Activated CD4-positive, alpha-beta T cell treated with anti-CD3 and anti-CD28 coated beads, Interleukin-2, amount 10 ng/mL, durations not matched to agents 24 days and 14 days (primary cell): ENCODE measurements at regions of chr10 and their contacts with region 1.

Region 1: GRCh38 chr10:132961787-132962622 is 19.6 kb upstream of the CFAP46 start:
- DNase-seq: peak; percentile 91
- H3K4me3 Mint-ChIP-seq: peak overlapping the region; percentile 84
- H3K27ac Mint-ChIP-seq: peak overlapping the region; percentile 74
- H3K4me1 Mint-ChIP-seq: peaks cover 17% of the 10 kb centered on the region
- H3K27me3 Mint-ChIP-seq: peaks cover 16% of the 10 kb centered on the region

Region 2: DNA sequence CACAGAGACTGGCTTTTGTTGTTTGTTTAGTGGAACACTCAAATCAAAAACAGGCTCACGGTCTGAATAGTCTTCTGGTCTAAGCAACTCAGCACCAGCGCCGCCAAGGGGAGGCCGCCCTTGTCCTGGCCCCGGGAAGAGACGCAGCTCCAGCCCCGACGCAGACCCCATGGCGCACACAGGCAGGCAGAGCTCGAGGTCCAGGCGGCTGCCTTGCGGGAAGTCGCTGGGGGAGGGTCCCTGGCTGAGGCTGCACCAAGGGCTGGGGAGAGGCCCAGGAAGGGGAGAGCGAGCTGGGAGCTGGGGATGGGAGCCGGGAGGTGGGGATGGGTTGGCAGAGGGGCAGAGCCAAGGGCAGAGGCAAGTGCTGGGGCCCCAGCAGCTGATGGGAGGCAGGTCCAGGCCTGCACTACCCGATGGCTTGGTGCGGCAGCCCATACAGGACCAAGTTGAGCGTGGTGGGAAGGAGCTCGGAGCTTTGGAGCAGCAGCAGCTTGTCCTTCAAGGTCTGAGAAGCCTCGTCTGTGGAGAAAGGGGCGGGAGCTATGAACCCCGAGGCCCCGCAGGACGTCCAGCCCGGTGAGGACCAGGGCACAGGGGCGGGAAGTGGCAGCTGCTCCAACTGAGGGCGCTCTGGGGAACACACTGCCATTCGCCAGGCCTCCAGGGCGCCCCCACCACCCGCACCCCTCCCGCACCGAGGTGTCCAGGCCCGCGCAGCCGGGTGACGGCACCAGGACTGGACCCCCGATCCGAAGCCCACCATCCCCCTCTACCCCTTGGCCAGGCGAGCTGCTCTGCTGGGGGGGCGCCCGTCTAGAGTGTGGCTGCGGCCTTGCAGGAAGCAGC is 153.4 kb before region 1 on chr10:
- intact Hi-C with region 1: no loop called
- DNase-seq: peak; percentile 51
- H3K4me3 Mint-ChIP-seq: no peak overlapping the region
- H3K27ac Mint-ChIP-seq: no peak overlapping the region
- H3K4me1 Mint-ChIP-seq: no peaks in the 10 kb centered on the region
- H3K27me3 Mint-ChIP-seq: no peaks in the 10 kb centered on the region

Region 3: GRCh38 chr10:132929953-132930548 is 32.0 kb before region 1 on chr10:
- intact Hi-C with region 1: loop called (anchors 2 kb)
- DNase-seq: no peak
- H3K4me3 Mint-ChIP-seq: no peak overlapping the region
- H3K27ac Mint-ChIP-seq: peak overlapping the region; percentile 76
- H3K4me1 Mint-ChIP-seq: no peaks in the 10 kb centered on the region
- H3K27me3 Mint-ChIP-seq: no peaks in the 10 kb centered on the region